ENCODE measurements at regions of chr10 and their contacts with region 1.

Region 1: GRCh38 chr10:93482145-93482834 is at the start of gene MYOF:
- DNase-seq: peak; percentile 46 to 62
- ATAC-seq: peak; percentile 87 to 96 (median 90)
- H3K4me3 ChIP-seq: peak within 1 kb of the TSS; percentile 67
- H3K27ac ChIP-seq: peak within 1 kb of the TSS; percentile 50
- H3K4me1 ChIP-seq: no peaks in the 10 kb centered on the region
- H3K27me3 ChIP-seq: peaks cover 0 to 5% (median 0%) of the 10 kb centered on the region in 3 donors
- CTCF ChIP-seq: peak; percentile 58
- total RNA-seq, gene MYOF: 4.2 to 9.4 (median 5.8) TPM

Region 2: GRCh38 chr10:93138113-93138870 is 344.0 kb before region 1 on chr10:
- intact Hi-C with region 1: no loop called
- DNase-seq: no peak
- ATAC-seq: no peak
- H3K4me3 ChIP-seq: no peak overlapping the region
- H3K27ac ChIP-seq: no peak overlapping the region
- H3K4me1 ChIP-seq: no peaks in the 10 kb centered on the region
- H3K27me3 ChIP-seq: no peaks in the 10 kb centered on the region
- CTCF ChIP-seq: no peak

Region 3: GRCh38 chr10:93437088-93437945 is 45.0 kb before region 1 on chr10:
- intact Hi-C with region 1: loop called in 1 of 2 experiments (anchors 5 kb)
- DNase-seq: peak; percentile 69 to 84
- ATAC-seq: peak; percentile 96 to 97 (median 97)
- H3K4me3 ChIP-seq: peak overlapping the region; percentile 35
- H3K27ac ChIP-seq: peak overlapping the region; percentile 90
- H3K4me1 ChIP-seq: peaks cover 22% of the 10 kb centered on the region
- H3K27me3 ChIP-seq: no peaks in the 10 kb centered on the region
- CTCF ChIP-seq: no peak